ENCODE measurements at regions of chr2 and their contacts with region 1.

Region 1: DNA sequence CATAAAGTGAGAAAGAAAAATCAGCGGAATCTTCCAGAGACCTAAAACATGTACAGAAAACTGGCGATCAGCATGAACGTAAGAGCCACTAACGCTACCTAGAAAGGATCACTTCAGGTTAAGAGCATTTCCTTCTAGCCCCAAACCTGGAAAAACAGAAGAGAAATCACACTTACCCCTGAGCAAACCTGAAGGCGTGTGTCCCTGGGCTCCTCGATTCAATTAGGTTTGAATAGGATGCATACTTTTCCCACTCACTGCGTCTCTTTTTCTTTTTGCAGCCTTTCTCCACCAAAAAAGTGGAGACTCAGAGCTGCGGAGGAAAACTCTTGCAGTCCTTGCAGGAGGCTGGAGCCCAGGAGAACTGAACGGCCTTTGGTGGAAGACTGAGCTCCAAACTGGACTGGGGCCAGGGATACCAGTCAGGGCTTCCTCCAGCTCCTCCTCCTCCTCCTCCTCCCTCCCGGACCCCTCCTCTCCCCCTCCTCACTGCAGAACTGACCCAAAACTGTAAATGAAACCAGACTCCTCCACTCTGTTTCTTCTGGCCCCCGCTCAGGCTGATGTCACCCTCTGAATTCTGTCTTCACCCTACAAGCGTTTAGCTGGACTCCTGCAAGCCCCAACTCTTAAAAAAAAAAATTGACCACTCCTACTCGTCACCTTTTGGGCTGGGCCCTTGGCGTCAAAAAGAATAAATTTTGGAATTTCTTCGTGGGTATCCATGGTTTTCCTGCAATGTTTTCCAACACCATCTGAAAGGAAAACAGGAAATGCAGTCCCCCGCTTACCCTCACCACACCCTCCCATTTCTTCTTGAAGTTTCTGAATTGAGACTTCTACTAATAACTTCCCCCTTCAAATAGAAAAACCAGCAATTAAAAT is at the start of gene COL6A3:
- DNase-seq: peak; percentile 76
- ATAC-seq: peak; percentile 62
- total RNA-seq, gene COL6A3: 64.9 TPM

Region 2: DNA sequence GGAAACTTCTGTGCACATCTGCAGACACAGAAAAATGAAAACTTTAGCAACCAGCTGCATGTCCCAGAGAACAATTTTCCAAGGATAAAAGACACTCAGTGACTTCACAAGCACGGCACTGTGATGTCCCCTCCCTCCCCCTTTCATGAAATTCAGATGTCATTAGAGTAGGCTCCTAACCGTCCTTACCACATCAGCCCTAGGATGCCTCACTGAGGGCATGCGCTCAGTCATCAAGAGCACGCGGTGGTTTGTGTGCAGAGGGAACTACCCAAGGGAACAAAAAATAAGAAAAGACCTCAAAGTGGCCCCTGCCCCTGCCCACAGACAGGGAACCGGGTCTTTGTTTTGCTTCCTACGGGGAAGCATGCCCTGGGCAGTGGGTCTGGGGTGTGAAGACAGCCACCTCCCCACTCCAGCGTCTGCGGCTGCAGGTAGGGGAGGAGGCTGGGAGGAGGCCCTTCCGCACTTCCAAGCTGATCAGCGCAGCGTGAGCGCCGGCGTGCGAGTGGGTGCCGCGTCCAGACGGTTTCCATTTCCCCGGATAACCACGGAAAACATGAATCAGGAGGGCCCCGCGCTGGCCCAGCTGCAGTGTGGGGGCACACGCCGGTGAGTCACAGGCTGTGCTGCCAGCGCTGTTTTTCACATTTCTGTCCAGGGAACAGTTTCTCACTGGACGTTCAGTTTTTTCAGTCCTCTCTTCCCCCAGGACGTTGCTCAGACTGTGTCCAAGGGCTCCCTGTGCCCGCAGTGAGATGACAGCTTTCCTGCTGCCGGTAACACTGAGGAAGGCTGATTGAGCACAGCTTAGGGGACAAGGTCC is 257.8 kb before region 1 on chr2:
- intact Hi-C with region 1: loop called (anchors 5 kb)
- DNase-seq: peak; percentile 68
- ATAC-seq: peak; percentile 42

Region 3: GRCh38 chr2:238069021-238069709 is 655.1 kb after region 1 on chr2:
- intact Hi-C with region 1: no loop called
- DNase-seq: no peak
- ATAC-seq: no peak

Measured in Right ventricle myocardium superior (tissue), 1 donor.